MCF 10A (cell line): ENCODE measurements at regions of chr12 and their contacts with region 1.

Region 1: GRCh38 chr12:46382964-46383653 is 10.5 kb upstream of the SLC38A2 start:
- DNase-seq: peak; percentile 97
- H3K4me3 Mint-ChIP-seq: peak overlapping the region; percentile 91
- H3K27ac Mint-ChIP-seq: peak overlapping the region; percentile 97
- H3K4me1 Mint-ChIP-seq: peaks cover 33% of the 10 kb centered on the region
- H3K27me3 Mint-ChIP-seq: no peaks in the 10 kb centered on the region
- CTCF ChIP-seq: no peak

Region 2: DNA sequence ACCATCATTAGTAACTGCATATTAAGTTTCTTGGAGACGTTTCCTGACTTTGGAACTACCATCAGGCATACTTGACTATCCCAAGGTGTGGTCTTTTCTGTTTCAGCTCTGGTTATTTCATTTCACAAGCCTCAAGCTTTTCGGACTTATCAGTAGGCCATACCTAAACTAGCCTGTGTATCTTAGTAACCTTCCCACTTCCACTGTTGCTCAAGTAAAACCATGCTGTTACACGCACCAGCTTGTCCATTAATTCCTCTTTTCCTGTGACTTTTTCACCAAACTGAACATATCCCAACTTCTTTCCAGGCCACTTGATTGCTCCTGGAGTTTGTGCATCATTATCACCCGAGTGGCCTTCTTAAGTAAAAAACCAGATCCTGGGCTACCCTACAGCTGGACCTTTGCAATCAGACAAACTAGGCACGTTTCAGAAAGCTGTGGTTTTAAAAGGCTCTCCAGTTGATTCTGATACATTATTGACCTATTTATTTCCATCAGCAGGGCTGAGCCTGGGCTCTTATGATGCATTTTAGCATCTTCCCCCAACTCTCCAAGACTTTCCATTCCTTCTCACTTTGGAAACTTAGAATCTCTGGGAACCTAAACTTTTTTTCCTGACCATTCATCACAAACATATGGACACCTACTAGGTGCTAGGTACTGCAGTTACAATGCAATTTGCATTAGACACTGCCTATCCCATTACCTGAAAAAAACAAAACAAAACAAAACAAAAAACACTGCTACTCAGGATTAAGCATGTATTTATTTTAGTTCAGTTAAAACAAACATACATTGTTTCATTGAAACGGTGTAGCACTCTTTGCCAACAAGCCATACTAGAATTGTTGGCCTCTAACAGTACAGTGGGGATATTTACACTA is 25.4 kb before region 1 on chr12:
- CTCF ChIA-PET with region 1: interaction called, 3 read pairs
- POLR2A ChIA-PET with region 1: interaction called, 302 read pairs
- intact Hi-C with region 1: no loop called
- DNase-seq: peak; percentile 72
- H3K4me3 Mint-ChIP-seq: no peak overlapping the region
- H3K27ac Mint-ChIP-seq: peak overlapping the region; percentile 7
- H3K4me1 Mint-ChIP-seq: peaks cover 18% of the 10 kb centered on the region
- H3K27me3 Mint-ChIP-seq: no peaks in the 10 kb centered on the region
- CTCF ChIP-seq: no peak

Region 3: GRCh38 chr12:46442239-46442638 is 59.1 kb after region 1 on chr12:
- CTCF ChIA-PET with region 1: interaction called, 11 read pairs
- POLR2A ChIA-PET with region 1: interaction called, 85 read pairs
- intact Hi-C with region 1: no loop called
- DNase-seq: peak; percentile 54
- H3K4me3 Mint-ChIP-seq: peak overlapping the region; percentile 28
- H3K27ac Mint-ChIP-seq: peak overlapping the region; percentile 97
- H3K4me1 Mint-ChIP-seq: peaks cover 61% of the 10 kb centered on the region
- H3K27me3 Mint-ChIP-seq: no peaks in the 10 kb centered on the region
- CTCF ChIP-seq: no peak

Region 4: GRCh38 chr12:46483572-46484395 is 100.7 kb after region 1 on chr12:
- CTCF ChIA-PET with region 1: interaction called, 3 read pairs
- POLR2A ChIA-PET with region 1: interaction called, 10 read pairs
- intact Hi-C with region 1: no loop called
- DNase-seq: peak; percentile 73
- H3K4me3 Mint-ChIP-seq: no peak overlapping the region
- H3K27ac Mint-ChIP-seq: peak overlapping the region; percentile 57
- H3K4me1 Mint-ChIP-seq: peaks cover 9% of the 10 kb centered on the region
- H3K27me3 Mint-ChIP-seq: no peaks in the 10 kb centered on the region
- CTCF ChIP-seq: no peak

Region 5: DNA sequence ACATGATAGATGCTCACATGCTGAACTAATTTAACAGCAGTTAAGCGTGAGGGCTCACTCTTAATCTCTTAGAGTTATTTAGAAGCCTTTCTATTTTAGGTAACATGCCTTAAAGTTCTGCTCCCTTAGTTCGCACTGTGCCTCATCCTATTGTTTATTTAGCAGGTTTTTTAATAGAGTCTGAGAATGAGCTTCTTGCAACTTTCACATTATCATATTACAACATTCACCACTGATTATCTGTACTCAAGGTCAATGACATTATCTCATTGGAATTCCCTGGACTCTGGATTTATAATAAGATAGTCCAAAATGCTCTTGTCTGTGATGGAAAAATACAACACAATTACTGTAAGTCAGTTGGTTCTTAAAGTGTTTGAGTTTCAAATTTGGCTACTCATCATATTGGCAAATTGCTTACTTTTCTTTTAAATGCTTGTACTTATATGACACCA is 173.0 kb after region 1 on chr12:
- CTCF ChIA-PET with region 1: interaction called, 3 read pairs
- POLR2A ChIA-PET with region 1: interaction called, 93 read pairs
- intact Hi-C with region 1: loop called (anchors 1 kb)
- DNase-seq: peak; percentile 85
- H3K4me3 Mint-ChIP-seq: peak overlapping the region; percentile 17
- H3K27ac Mint-ChIP-seq: peak overlapping the region; percentile 68
- H3K4me1 Mint-ChIP-seq: peaks cover 73% of the 10 kb centered on the region
- H3K27me3 Mint-ChIP-seq: no peaks in the 10 kb centered on the region
- CTCF ChIP-seq: no peak